ENCODE measurements at regions of chr5 and their contacts with region 1.

Region 1: DNA sequence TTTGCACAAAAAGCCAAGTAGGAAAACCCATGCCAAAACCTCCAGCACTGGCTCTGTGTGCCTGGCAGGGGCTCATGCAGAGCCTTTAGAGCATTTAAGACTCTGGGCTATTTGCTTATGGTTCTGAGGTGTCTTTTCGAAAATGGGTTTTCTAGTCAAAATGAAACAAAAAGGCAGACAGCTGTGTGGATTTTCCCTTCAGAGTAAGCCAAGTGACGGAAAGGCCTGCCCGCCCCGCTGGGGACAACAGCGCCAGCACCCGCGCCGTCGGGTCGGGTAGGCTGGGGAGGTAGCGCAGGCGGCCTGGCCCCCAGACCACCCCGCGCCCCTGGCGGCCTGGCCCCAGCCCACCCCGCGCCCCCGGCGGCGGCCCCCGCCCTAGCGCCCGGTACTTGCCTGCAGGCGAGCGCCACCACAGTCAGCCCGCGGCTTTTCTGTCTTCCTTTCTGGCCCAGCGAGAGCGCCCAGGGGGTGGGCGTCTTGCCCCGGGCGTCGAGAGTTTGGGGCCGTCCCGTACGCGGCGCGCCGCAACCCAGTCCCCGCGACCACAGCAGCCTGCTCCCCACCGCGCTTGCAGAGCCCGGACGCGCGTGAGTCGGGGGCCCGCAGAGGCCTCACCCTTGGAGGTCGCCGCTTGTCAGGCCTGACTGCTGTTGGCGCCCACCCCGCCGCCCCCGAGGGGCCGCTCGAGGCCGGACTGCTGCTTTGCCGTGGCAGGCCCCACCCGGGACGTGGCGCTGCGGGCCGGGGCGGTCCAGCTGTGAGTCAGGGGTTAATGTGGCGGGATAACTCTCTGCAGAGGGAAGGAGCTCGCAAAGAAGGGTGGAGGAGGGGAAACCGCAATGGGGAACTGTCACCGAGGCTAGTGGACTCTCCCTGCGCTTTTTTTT is at the start of gene TICAM2:
- DNase-seq: peak; percentile 72
- ATAC-seq: peak; percentile 90
- H3K4me3 Mint-ChIP-seq: peak within 1 kb of the TSS; percentile 68
- H3K27ac Mint-ChIP-seq: peak within 1 kb of the TSS; percentile 55
- H3K4me1 Mint-ChIP-seq: peaks cover 37% of the 10 kb centered on the region
- H3K27me3 Mint-ChIP-seq: no peaks in the 10 kb centered on the region
- total RNA-seq, gene TICAM2: 1.6 to 1.8 TPM

Region 2: GRCh38 chr5:115625579-115626444 is 23.9 kb after region 1 on chr5 and contains the start of gene TMED7:
- CTCF ChIA-PET with region 1: interaction called, 12 read pairs
- DNase-seq: peak; percentile 100
- ATAC-seq: peak; percentile 94
- H3K4me3 Mint-ChIP-seq: no peak within 1 kb of the TSS
- H3K27ac Mint-ChIP-seq: no peak within 1 kb of the TSS
- H3K4me1 Mint-ChIP-seq: peaks cover 29% of the 10 kb centered on the region
- H3K27me3 Mint-ChIP-seq: no peaks in the 10 kb centered on the region
- total RNA-seq, gene TMED7: 41.8 to 44.3 TPM